ENCODE measurements at regions of chr1 and their contacts with region 1.

Region 1: GRCh38 chr1:155934097-155934935 is at the start of gene KHDC4:
- DNase-seq: peak; percentile 99
- H3K4me3 ChIP-seq: peak within 1 kb of the TSS; percentile 87
- H3K27ac ChIP-seq: peak within 1 kb of the TSS; percentile 82
- H3K4me1 ChIP-seq: peaks cover 52% of the 10 kb centered on the region
- CTCF ChIP-seq: no peak; the same call in 1 of the 2 replicates
- total RNA-seq, gene KHDC4: 84.6 and 88.9 TPM in 2 replicates

Region 2: GRCh38 chr1:155859234-155859829 is 75.0 kb before region 1 on chr1 and contains the start of gene SYT11:
- CTCF ChIA-PET with region 1: no interaction called
- POLR2A ChIA-PET with region 1: interaction called, 4 read pairs
- intact Hi-C with region 1: loop called (anchors 2 kb)
- DNase-seq: peak; percentile 99
- H3K4me3 ChIP-seq: peak within 1 kb of the TSS; percentile 79
- H3K27ac ChIP-seq: peak within 1 kb of the TSS; percentile 89
- H3K4me1 ChIP-seq: peaks cover 60% of the 10 kb centered on the region
- CTCF ChIP-seq: no peak
- total RNA-seq, gene SYT11: 41.6 and 41.8 TPM in 2 replicates

Region 3: DNA sequence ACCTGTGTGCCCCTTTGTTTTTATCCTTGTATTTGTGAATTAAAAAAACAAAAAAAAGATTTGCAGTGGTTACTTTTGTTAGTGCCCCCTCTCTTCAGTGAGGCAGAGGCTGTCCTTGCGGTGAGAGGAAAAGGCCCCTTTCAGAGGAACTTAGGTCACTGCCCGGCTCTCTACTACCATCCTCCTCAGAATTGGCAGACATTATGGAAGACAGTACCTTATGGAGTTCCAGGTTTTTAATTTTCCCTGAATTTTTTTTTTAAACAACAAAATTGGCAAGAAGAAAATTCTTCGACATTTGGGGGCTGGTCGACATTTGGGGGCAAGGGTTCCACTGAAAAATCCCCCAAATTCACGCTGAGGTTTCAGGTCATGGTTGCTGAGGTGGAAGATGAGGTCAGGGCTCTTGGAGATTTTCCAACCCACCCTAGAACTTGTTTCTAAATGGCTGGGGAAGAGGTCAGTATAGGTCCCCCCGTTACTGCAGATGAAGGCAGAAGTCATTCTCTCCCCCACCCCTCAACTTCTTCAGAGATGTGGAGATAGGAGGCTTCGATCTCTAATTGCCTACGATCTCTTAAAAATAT is 12.4 kb after region 1 on chr1:
- CTCF ChIA-PET with region 1: no interaction called
- POLR2A ChIA-PET with region 1: interaction called, 18 read pairs
- intact Hi-C with region 1: no loop called
- DNase-seq: no peak
- H3K4me3 ChIP-seq: peak overlapping the region; percentile 37
- H3K27ac ChIP-seq: peak overlapping the region; percentile 96
- H3K4me1 ChIP-seq: peaks cover 60% of the 10 kb centered on the region
- CTCF ChIP-seq: no peak

Region 4: GRCh38 chr1:155989242-155990004 is 55.1 kb after region 1 on chr1:
- CTCF ChIA-PET with region 1: interaction called, 17 read pairs
- POLR2A ChIA-PET with region 1: interaction called, 5 read pairs
- intact Hi-C with region 1: loop called (anchors 1 kb)
- DNase-seq: peak; percentile 85
- H3K4me3 ChIP-seq: no peak overlapping the region
- H3K27ac ChIP-seq: no peak overlapping the region
- H3K4me1 ChIP-seq: peaks cover 28% of the 10 kb centered on the region
- CTCF ChIP-seq: peak; percentile 96

Region 5: GRCh38 chr1:156004843-156005593 is 70.7 kb after region 1 on chr1:
- CTCF ChIA-PET with region 1: no interaction called
- POLR2A ChIA-PET with region 1: no interaction called
- intact Hi-C with region 1: no loop called
- DNase-seq: no peak
- H3K4me3 ChIP-seq: no peak overlapping the region
- H3K27ac ChIP-seq: no peak overlapping the region
- H3K4me1 ChIP-seq: no peaks in the 10 kb centered on the region
- CTCF ChIP-seq: no peak

Region 6: GRCh38 chr1:156065871-156066270 is 131.6 kb after region 1 on chr1:
- CTCF ChIA-PET with region 1: interaction called, 4 read pairs
- POLR2A ChIA-PET with region 1: interaction called, 3 read pairs
- intact Hi-C with region 1: loop called (anchors 1 kb)
- DNase-seq: no peak
- H3K4me3 ChIP-seq: no peak overlapping the region
- H3K27ac ChIP-seq: no peak overlapping the region
- H3K4me1 ChIP-seq: no peaks in the 10 kb centered on the region
- CTCF ChIP-seq: no peak